ENCODE measurements at regions of chr2 and their contacts with region 1.

Region 1: GRCh38 chr2:20135631-20136050 is 84.2 kb upstream of the LAPTM4A start:
- DNase-seq: peak; percentile 76 to 91
- ATAC-seq: no peak
- H3K4me3 ChIP-seq: no peak overlapping the region
- H3K27ac ChIP-seq: no peak overlapping the region
- H3K4me1 ChIP-seq: no peaks in the 10 kb centered on the region
- H3K27me3 ChIP-seq: no peaks in the 10 kb centered on the region

Region 2: DNA sequence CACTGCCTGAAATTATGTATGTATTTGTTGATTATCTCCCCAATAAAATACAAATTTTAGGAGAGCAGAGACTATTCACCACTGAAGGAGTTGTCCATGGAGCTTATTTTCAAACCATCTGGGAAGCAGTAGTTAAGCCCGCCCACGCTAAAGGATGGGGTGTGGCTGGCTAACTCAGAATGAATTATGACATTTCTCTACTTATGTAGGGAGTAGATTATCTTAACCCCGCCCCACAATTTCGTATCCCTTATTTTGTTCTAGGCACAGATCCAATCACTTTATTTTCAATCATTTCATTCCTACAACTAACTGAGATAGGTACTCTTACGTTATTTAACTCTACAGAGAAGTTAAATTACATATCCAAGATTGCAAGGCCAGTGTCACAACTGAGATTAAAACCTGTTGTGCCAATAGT is 82.8 kb before region 1 on chr2:
- intact Hi-C with region 1: no loop called
- DNase-seq: peak; percentile 73 to 81
- ATAC-seq: no peak
- H3K4me3 ChIP-seq: peak overlapping the region; percentile 54 to 80
- H3K27ac ChIP-seq: no peak overlapping the region
- H3K4me1 ChIP-seq: peaks cover 0 to 1% of the 10 kb centered on the region in 2 donors
- H3K27me3 ChIP-seq: no peaks in the 10 kb centered on the region

Region 3: GRCh38 chr2:20224716-20225293 is 89.2 kb after region 1 on chr2 and contains the start of gene SDC1:
- intact Hi-C with region 1: loop called (anchors 5 kb)
- DNase-seq: peak; percentile 61 to 87
- ATAC-seq: peak; percentile 45
- H3K4me3 ChIP-seq: peak within 1 kb of the TSS; percentile 51 to 59
- H3K27ac ChIP-seq: no peak within 1 kb of the TSS
- H3K4me1 ChIP-seq: no peaks in the 10 kb centered on the region
- H3K27me3 ChIP-seq: no peaks in the 10 kb centered on the region
- total RNA-seq, gene SDC1: 0.66 to 1.4 TPM

Measured in aorta (tissue), 5 donors.